ENCODE measurements at regions of chr16 and their contacts with region 1.

Region 1: GRCh38 chr16:2968738-2969544 is at the start of gene PAQR4:
- DNase-seq: peak; percentile 80
- ATAC-seq: peak; percentile 71
- H3K4me3 ChIP-seq: peak within 1 kb of the TSS; percentile 86 to 91 (median 91)
- H3K27ac ChIP-seq: peak within 1 kb of the TSS; percentile 76
- H3K4me1 ChIP-seq: peaks cover 17% of the 10 kb centered on the region
- H3K27me3 ChIP-seq: no peaks in the 10 kb centered on the region; a peak in 1 of 5 replicates
- CTCF ChIP-seq: peak; percentile 30
- EP300 ChIP-seq: peak in 1 of 2 experiments; percentile 28; a peak in 1 of 4 replicates
- POLR2A ChIP-seq: peak; percentile 33 to 80; a peak in 3 of 4 replicates
- RAD21 ChIP-seq: no peak; the same call in 1 of the 2 replicates
- total RNA-seq, gene PAQR4: 15.6 and 24.8 TPM in 2 replicates

Region 2: GRCh38 chr16:2770057-2770951 is 198.6 kb before region 1 on chr16:
- CTCF ChIA-PET with region 1: no interaction called
- POLR2A ChIA-PET with region 1: no interaction called
- in situ Hi-C with region 1: no loop called
- intact Hi-C with region 1: no loop called
- DNase-seq: no peak
- ATAC-seq: peak; percentile 21
- H3K4me3 ChIP-seq: no peak overlapping the region
- H3K27ac ChIP-seq: no peak overlapping the region
- H3K4me1 ChIP-seq: peaks cover 5% of the 10 kb centered on the region
- H3K27me3 ChIP-seq: no peaks in the 10 kb centered on the region
- CTCF ChIP-seq: 0 out of 2 replicates have a peak, but pooled peaks have one; percentile 14
- EP300 ChIP-seq: no peak
- POLR2A ChIP-seq: peak in 1 of 2 experiments; percentile 30; a peak in 1 of 4 replicates
- RAD21 ChIP-seq: 0 out of 2 replicates have a peak, but pooled peaks have one; percentile 18

Region 3: DNA sequence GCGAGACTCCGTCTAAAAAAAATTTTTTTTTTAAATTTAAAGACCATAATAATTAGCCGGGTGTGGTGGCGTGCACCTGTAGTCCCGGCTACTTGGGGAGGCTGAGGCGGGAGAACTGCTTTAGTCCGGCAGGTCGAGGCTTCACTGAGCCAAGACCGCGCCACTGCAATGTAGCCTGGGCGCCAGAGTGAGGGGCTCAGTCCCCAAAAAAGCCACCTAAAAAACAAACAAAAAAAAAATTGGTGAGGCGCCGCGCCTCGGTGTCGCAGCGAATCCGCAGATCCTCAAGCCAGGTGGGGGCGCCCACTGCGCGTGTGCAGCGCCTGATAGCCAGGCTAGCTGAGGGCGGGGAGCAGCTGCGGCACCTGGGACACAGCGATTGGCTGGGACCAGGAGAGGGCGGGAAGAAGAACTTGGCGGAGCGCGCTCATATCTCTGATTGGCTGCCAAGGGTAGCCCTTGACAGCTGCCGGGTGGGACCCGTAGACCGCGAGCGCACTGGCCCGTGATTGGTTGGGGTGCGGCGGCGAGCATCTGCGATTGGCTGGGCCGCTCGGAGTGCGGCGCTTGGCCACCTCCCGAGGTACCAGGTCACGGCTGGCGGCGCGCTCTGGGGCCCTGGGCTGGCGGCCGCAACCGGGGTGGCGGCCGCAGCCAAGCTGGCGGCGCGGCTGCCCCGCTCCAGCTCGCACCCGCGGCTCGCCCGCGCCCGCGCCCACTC is 34.8 kb after region 1 on chr16:
- CTCF ChIA-PET with region 1: no interaction called
- POLR2A ChIA-PET with region 1: interaction called, 10 read pairs
- in situ Hi-C with region 1: no loop called
- intact Hi-C with region 1: no loop called
- DNase-seq: peak; percentile 97
- ATAC-seq: peak; percentile 91
- H3K4me3 ChIP-seq: peak overlapping the region in 2 of 3 experiments; percentile 27 to 46; a peak in 2 of 6 replicates
- H3K27ac ChIP-seq: no peak overlapping the region
- H3K4me1 ChIP-seq: peaks cover 49% of the 10 kb centered on the region
- H3K27me3 ChIP-seq: no peaks in the 10 kb centered on the region
- CTCF ChIP-seq: peak; percentile 98
- EP300 ChIP-seq: 0 out of 4 replicates have a peak, but pooled peaks of 1 of the 2 experiments have one; percentile 4
- POLR2A ChIP-seq: no peak; a peak in 1 of 4 replicates
- RAD21 ChIP-seq: peak; percentile 96

Region 4: GRCh38 chr16:3038256-3038655 is 69.3 kb after region 1 on chr16:
- CTCF ChIA-PET with region 1: no interaction called
- POLR2A ChIA-PET with region 1: no interaction called
- in situ Hi-C with region 1: no loop called
- intact Hi-C with region 1: no loop called
- DNase-seq: peak; percentile 33
- ATAC-seq: peak; percentile 10; the same call in 2 of the 3 replicates
- H3K4me3 ChIP-seq: no peak overlapping the region
- H3K27ac ChIP-seq: no peak overlapping the region
- H3K4me1 ChIP-seq: peaks cover 34% of the 10 kb centered on the region
- H3K27me3 ChIP-seq: peaks cover 16 to 73% of the 10 kb centered on the region in 2 experiments; a peak in 4 of 5 replicates
- CTCF ChIP-seq: no peak
- EP300 ChIP-seq: no peak
- POLR2A ChIP-seq: no peak
- RAD21 ChIP-seq: no peak